MCF 10A (cell line): ENCODE measurements at regions of chr18 and their contacts with region 1.

Region 1: GRCh38 chr18:6629635-6630140 is 99.8 kb upstream of the ARHGAP28 start:
- DNase-seq: peak; percentile 50
- H3K4me3 Mint-ChIP-seq: peak overlapping the region; percentile 34
- H3K27ac Mint-ChIP-seq: peak overlapping the region; percentile 90
- H3K4me1 Mint-ChIP-seq: peaks cover 30% of the 10 kb centered on the region
- H3K27me3 Mint-ChIP-seq: no peaks in the 10 kb centered on the region
- CTCF ChIP-seq: no peak

Region 2: DNA sequence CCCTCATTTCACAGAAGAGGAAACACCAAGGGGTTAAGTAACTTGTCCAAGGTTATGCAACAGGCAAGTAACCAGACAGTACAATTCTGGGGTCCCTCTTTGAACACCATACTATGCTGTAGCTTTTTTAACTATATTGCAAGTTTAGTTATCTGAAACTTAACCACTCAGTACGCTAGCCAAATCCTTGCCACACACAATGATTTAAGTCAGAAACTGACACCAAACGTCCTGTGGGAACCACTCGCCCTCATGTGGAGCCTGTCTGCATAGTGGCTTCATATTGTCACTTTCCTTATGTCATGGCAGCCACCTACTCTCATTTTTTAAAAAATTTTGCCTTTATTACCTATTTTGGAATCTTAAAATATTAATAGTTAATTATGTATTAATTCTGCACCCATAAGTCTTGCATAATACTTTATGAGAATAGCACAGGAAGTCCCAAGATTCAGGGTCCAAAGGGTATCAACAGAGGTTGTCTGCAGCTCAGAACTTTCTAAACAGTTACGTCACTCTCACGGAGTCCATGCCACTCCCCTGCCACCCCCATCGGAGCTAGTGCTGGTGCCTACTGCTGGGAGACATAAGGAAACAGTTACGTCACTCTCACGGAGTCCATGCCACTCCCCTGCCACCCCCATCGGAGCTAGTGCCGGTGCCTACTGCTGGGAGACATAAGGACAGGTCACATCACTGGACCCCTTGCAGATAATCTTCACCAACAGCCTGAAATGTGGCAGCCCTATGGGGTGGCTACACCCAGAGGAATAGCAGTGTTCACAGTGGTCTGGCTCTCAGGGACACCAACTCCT is 314.0 kb before region 1 on chr18:
- CTCF ChIA-PET with region 1: no interaction called
- POLR2A ChIA-PET with region 1: no interaction called
- intact Hi-C with region 1: no loop called
- DNase-seq: no peak
- H3K4me3 Mint-ChIP-seq: no peak overlapping the region
- H3K27ac Mint-ChIP-seq: no peak overlapping the region
- H3K4me1 Mint-ChIP-seq: no peaks in the 10 kb centered on the region
- H3K27me3 Mint-ChIP-seq: peaks cover 15% of the 10 kb centered on the region
- CTCF ChIP-seq: no peak

Region 3: DNA sequence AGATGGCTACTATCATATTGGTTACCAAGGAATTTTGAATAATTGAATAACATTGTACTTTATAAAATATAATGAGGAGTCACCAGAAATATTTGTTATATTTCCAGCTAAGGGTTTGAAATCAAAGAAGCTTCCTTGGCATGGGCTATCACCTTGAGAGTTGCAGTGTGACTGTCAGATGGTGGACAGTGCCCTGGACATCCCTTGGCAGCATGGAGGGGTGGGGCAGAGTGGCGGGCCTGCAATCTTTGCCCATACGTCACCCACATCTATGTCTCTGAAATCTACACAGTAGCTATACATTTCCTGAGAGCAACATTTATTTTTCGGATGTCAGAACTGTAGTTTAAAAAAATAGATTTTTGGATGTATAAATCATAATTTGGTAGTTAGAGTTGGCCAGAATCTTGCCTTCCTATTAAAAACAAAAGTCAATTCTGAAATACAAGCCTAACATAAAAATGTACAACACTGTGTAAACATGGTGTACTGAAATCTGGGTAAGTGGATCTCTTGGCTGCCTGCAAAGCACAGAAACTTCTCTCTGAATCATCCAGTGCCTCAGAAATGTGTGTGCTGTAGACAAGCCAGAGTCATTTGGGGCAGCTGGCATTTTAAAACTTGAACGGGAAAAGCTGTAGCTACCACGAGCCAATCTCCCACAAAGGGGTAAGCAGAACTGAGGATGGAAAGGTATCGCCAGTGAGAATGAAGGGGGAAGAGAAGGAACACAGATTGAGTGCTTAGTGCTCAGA is 24.4 kb before region 1 on chr18:
- CTCF ChIA-PET with region 1: interaction called, 8 read pairs
- POLR2A ChIA-PET with region 1: interaction called, 11 read pairs
- intact Hi-C with region 1: no loop called
- DNase-seq: no peak
- H3K4me3 Mint-ChIP-seq: no peak overlapping the region
- H3K27ac Mint-ChIP-seq: no peak overlapping the region
- H3K4me1 Mint-ChIP-seq: peaks cover 13% of the 10 kb centered on the region
- H3K27me3 Mint-ChIP-seq: no peaks in the 10 kb centered on the region
- CTCF ChIP-seq: no peak